GM23248 (cell line): ENCODE measurements at regions of chr7 and their contacts with region 1.

Region 1: DNA sequence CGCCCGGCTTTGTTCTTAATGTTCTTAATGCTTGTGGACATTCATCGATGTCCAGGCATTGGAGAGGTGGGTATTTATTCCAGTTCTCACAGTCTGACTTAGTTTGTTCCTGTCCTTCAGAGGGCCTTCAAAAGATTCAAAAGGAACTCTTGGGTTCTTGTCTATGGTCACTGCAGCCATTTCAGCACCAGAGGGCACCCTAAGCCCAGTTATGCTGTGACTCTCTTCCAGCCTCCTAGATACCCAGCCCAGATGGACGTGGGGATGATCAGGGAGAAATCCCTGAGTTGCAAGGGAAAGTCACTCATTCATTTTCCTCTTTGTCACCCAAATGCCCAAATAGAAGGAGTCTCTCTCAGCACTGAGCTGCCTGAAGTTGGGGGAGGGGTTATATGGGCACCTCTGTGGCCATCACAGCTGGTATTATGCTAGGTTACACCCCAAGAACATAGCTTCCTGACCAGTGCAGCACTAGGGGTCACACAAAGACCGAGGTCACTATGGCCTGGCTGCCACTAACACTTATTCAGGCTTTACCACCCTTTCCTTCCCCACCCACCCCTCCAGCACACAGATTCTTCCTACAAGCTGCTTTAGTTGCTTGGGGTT is 26.5 kb upstream of the CCDC126 start:
- DNase-seq: peak; percentile 79
- H3K4me3 ChIP-seq: no peak overlapping the region
- H3K27ac ChIP-seq: no peak overlapping the region
- H3K4me1 ChIP-seq: no peaks in the 10 kb centered on the region
- H3K27me3 ChIP-seq: no peaks in the 10 kb centered on the region

Region 2: DNA sequence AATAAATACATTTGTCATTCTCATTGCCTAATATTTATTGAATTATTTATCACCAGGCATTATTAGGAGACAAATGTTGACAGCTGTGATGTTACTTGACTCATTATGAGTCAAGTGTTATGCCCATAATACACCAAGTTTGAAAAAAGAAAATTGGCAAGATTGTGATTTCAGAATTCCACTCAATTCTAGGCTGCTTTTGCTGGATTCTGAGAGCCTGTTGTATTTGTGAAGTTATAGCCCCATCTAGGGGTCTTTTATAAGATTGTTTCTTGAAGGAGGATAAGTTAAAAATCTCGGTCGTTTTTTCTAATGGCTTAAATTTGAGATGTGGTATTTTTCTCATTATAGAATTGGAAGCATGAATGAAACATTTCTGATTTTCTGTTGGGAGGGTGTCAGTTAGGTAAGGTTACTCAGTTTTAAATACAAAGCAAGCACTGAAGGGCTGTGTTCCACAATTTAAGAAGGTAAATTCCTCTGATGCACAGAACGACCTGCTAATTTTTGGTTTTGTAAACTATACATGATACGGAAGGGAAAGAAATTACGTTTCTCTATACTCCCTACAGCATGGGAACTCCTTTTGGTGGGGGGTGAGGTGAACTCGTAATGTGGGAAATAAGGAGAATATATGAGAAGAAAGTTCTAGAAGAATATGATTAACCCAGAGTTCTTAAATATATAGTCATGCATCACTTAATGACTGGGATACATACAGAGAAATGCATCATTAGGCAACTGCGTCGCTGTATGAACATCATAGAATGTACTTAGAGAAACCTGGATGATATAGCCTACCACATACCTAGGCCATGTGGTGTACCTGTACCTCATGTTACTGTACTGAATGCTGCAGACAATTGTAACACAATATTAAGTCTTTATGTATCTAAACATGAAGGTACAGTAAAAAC is 141.9 kb after region 1 on chr7:
- in situ Hi-C with region 1: loop called (anchors 5 kb)
- DNase-seq: peak; percentile 84
- H3K4me3 ChIP-seq: no peak overlapping the region
- H3K27ac ChIP-seq: no peak overlapping the region
- H3K4me1 ChIP-seq: peaks cover 18% of the 10 kb centered on the region
- H3K27me3 ChIP-seq: no peaks in the 10 kb centered on the region

Region 3: DNA sequence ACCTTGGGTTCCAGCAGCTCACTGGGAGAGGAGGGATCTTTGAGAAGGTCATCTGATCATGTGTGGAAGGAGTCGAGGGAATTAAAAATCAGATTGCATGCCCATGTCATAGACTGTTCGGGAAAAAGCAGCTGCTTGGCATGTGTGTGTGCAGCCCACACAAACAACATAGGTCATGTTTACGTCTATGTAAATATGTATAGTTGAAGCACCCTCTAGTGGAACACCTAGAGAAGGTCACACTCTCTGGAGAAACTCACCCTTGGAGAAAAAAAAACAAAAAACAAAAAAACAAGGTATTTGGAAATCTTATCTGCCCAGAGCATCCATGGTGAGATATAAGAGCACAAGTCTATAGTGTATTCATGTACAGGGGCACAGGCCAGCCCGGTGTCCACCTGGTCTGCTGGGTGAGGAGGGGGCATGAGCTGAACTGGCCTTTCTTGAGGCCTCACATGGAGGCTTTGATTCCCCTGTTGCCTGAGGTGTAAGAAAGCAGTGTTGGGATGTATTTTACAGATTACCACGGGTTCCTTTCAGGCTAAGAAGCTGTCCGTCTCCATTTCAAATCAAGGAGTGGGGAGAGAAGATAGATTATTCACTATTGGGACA is 811.3 kb after region 1 on chr7:
- in situ Hi-C with region 1: loop called (anchors 25 kb)
- DNase-seq: peak; percentile 48
- H3K4me3 ChIP-seq: no peak overlapping the region
- H3K27ac ChIP-seq: no peak overlapping the region
- H3K4me1 ChIP-seq: no peaks in the 10 kb centered on the region
- H3K27me3 ChIP-seq: 0 out of 2 replicates have a peak, but pooled peaks cover 11% of the 10 kb centered on the region

Region 4: GRCh38 chr7:24665564-24666294 is 1095.0 kb after region 1 on chr7:
- in situ Hi-C with region 1: loop called (anchors 25 kb)
- DNase-seq: peak; percentile 69
- H3K4me3 ChIP-seq: no peak overlapping the region
- H3K27ac ChIP-seq: no peak overlapping the region
- H3K4me1 ChIP-seq: peaks cover 14% of the 10 kb centered on the region
- H3K27me3 ChIP-seq: no peaks in the 10 kb centered on the region